ENCODE measurements at regions of chr2 and their contacts with region 1.

Region 1: GRCh38 chr2:20650880-20651730 is at the start of gene HS1BP3:
- DNase-seq: peak; percentile 82 to 85
- ATAC-seq: peak; percentile 82 to 97
- H3K4me3 ChIP-seq: peak within 1 kb of the TSS; percentile 89
- H3K27ac ChIP-seq: peak within 1 kb of the TSS; percentile 94
- H3K4me1 ChIP-seq: peaks cover 12% of the 10 kb centered on the region; the same call in 2 of the 3 replicates
- CTCF ChIP-seq: peak; percentile 99
- EP300 ChIP-seq: no peak
- POLR2A ChIP-seq: peak; percentile 92
- RAD21 ChIP-seq: peak; percentile 53 to 84
- polyA plus RNA-seq, gene HS1BP3: 12.4 and 13.8 TPM in 2 replicates

Region 2: DNA sequence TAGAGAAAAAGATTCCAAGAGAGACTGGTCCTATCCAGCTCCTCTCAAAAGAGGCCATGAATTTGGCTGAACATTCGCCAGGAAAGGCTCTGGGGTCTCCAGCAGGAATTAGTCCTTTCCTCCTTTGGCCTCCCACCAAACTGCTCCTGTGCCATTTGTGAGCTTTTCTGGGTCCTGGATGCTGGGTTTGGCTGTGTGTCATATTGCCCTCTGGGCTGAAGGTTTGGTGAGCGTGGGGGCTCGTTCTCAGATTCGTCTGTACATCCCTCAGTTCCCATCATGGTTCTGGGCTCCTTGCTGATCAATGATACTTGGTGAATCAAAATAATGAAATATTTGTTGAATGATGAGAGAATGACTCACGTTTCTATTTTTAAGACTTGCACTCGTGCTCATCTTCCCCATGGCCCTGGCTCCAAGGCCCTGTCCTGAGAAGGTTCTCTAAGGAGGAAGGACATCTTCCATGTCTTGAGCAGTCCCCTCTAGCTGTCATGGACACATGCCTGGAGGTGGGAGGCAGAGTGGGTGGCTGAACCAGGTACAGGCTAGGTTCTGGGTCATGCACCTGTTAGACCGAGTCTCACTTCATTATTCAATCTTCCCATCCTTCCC is 252.0 kb before region 1 on chr2:
- CTCF ChIA-PET with region 1: interaction called, 20 read pairs
- POLR2A ChIA-PET with region 1: interaction called, 3 read pairs
- DNase-seq: no peak
- ATAC-seq: no peak
- H3K4me3 ChIP-seq: no peak overlapping the region
- H3K27ac ChIP-seq: no peak overlapping the region
- H3K4me1 ChIP-seq: no peaks in the 10 kb centered on the region
- CTCF ChIP-seq: no peak
- EP300 ChIP-seq: no peak
- POLR2A ChIP-seq: no peak
- RAD21 ChIP-seq: no peak

Region 3: GRCh38 chr2:20424300-20425290 is 226.5 kb before region 1 on chr2:
- CTCF ChIA-PET with region 1: interaction called, 13 read pairs
- POLR2A ChIA-PET with region 1: no interaction called
- DNase-seq: no peak
- ATAC-seq: 0 out of 6 replicates have a peak, but pooled peaks of 1 of the 2 experiments have one; percentile 10
- H3K4me3 ChIP-seq: no peak overlapping the region
- H3K27ac ChIP-seq: peak overlapping the region in 1 of 2 experiments; percentile 3; a peak in 1 of 6 replicates
- H3K4me1 ChIP-seq: 0 out of 3 replicates have a peak, but pooled peaks cover 2% of the 10 kb centered on the region
- CTCF ChIP-seq: no peak
- EP300 ChIP-seq: no peak
- POLR2A ChIP-seq: no peak
- RAD21 ChIP-seq: no peak

Region 4: GRCh38 chr2:20452551-20452950 is 198.6 kb before region 1 on chr2:
- CTCF ChIA-PET with region 1: interaction called, 12 read pairs
- POLR2A ChIA-PET with region 1: interaction called, 73 read pairs
- DNase-seq: peak in 1 of 2 experiments; percentile 61
- ATAC-seq: peak; percentile 14 to 31; a peak in 4 of 6 replicates
- H3K4me3 ChIP-seq: no peak overlapping the region
- H3K27ac ChIP-seq: peak overlapping the region in 1 of 2 experiments; percentile 15; a peak in 2 of 6 replicates
- H3K4me1 ChIP-seq: peaks cover 23% of the 10 kb centered on the region
- CTCF ChIP-seq: no peak
- EP300 ChIP-seq: no peak
- POLR2A ChIP-seq: no peak
- RAD21 ChIP-seq: peak; percentile 35 to 55; a peak in 2 of 5 replicates

Region 5: GRCh38 chr2:20962939-20963557 is 311.9 kb after region 1 on chr2:
- CTCF ChIA-PET with region 1: interaction called, 44 read pairs
- POLR2A ChIA-PET with region 1: no interaction called
- DNase-seq: peak; percentile 45 to 67
- ATAC-seq: peak; percentile 85 to 93
- H3K4me3 ChIP-seq: no peak overlapping the region
- H3K27ac ChIP-seq: no peak overlapping the region
- H3K4me1 ChIP-seq: no peaks in the 10 kb centered on the region
- CTCF ChIP-seq: peak; percentile 93
- EP300 ChIP-seq: no peak
- POLR2A ChIP-seq: no peak
- RAD21 ChIP-seq: peak; percentile 82 to 84